ENCODE measurements at regions of chr17 and their contacts with region 1.

Region 1: DNA sequence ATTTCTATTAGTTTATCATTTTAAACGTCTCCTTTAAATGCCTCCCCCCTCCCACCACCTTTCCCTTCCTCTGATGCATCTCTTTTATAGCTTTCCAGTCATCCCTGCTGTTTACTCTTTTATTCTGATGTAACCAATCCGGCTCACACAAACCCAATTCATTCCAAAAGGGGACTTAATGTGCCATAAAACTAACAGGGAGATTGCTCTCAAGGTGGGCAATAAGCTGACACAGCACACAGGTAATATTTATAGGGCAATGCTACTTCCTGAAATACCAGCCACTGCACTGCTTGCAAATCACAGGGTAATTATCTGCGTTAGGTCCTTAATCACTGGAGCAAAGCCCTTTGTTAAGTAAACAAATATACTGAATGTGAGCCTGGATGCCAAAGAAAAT is 23.3 kb upstream of the CA10 start:
- DNase-seq: no peak
- H3K4me3 ChIP-seq: no peak overlapping the region
- H3K27ac ChIP-seq: no peak overlapping the region
- H3K4me1 ChIP-seq: no peaks in the 10 kb centered on the region
- H3K27me3 ChIP-seq: no peaks in the 10 kb centered on the region
- CTCF ChIP-seq: no peak

Region 2: GRCh38 chr17:52276381-52277008 is 94.7 kb after region 1 on chr17:
- CTCF ChIA-PET with region 1: no interaction called
- dilution Hi-C with region 1: loop called (anchors 10 kb)
- in situ Hi-C with region 1: no loop called
- intact Hi-C with region 1: no loop called
- DNase-seq: no peak
- H3K4me3 ChIP-seq: no peak overlapping the region
- H3K27ac ChIP-seq: no peak overlapping the region
- H3K4me1 ChIP-seq: no peaks in the 10 kb centered on the region
- H3K27me3 ChIP-seq: peaks cover 3% of the 10 kb centered on the region
- CTCF ChIP-seq: no peak